Activated T-helper 2 cell treated with anti-CD3 and anti-CD28 coated beads, Interferon-gamma antibody, Interleukin-2, Interleukin-4, amounts not matched to agents 10 μg/mL and 5 μg/mL and 100 μg/mL, durations not matched to agents 14 hours and 24 hours and 36 hours (primary cell): ENCODE measurements at regions of chr6 and their contacts with region 1.

Region 1: DNA sequence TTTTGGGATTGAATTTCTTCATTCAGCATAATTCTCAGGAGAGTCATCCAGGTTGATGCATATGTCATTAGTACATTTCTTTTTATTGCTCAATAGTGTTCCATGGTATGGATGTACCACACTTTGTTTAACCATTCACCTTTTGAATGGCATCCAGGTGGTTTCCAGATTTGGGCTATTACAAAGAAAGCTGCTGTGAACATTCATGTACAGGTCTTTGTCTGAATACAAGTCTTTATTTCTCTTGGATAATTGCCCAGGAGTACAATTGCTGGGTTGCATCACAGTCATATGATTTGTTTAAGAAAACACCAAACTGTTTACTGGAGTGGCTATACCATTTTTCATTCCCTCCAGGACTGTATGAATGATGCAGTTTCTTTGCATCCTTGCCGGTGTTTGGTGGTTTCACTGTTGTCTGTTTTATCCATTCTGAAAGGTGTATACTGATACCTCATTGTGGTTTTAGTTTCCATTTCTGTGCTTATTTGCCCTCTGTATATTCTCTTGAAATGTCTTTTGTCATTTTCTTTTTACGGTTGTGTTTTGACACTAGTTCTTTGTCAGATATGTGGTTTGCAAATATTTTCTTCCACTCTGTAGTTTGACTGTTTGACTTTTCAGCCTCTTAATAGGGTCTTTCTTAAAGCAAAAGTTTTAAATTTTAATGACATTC is 8.8 kb downstream of the CDKAL1 start:
- DNase-seq: peak; percentile 31
- H3K4me3 Mint-ChIP-seq: peak overlapping the region; percentile 59
- H3K27ac Mint-ChIP-seq: peak overlapping the region; percentile 88
- H3K4me1 Mint-ChIP-seq: peaks cover 56% of the 10 kb centered on the region
- H3K27me3 Mint-ChIP-seq: no peaks in the 10 kb centered on the region

Region 2: DNA sequence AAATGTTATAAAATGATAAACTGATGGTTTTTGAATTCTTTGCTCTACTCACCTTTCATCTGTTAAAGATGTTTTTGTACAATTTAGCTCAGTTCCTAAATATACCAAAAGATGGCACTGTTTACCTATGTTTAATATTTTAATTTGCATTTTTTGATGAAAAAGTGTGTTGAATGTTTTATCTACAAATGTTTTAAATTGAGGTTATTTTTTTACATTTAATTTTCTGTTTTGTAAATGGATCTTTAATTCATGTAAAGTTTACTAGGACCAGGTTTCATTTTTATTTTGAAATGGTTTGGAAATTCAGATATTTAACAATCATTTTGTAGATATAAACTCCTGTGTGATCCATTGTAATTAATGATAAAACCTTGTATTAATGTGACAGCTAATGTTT is 21.2 kb after region 1 on chr6:
- intact Hi-C with region 1: loop called (anchors 2 kb)
- DNase-seq: no peak
- H3K4me3 Mint-ChIP-seq: no peak overlapping the region
- H3K27ac Mint-ChIP-seq: no peak overlapping the region
- H3K4me1 Mint-ChIP-seq: peaks cover 22% of the 10 kb centered on the region
- H3K27me3 Mint-ChIP-seq: no peaks in the 10 kb centered on the region

Region 3: DNA sequence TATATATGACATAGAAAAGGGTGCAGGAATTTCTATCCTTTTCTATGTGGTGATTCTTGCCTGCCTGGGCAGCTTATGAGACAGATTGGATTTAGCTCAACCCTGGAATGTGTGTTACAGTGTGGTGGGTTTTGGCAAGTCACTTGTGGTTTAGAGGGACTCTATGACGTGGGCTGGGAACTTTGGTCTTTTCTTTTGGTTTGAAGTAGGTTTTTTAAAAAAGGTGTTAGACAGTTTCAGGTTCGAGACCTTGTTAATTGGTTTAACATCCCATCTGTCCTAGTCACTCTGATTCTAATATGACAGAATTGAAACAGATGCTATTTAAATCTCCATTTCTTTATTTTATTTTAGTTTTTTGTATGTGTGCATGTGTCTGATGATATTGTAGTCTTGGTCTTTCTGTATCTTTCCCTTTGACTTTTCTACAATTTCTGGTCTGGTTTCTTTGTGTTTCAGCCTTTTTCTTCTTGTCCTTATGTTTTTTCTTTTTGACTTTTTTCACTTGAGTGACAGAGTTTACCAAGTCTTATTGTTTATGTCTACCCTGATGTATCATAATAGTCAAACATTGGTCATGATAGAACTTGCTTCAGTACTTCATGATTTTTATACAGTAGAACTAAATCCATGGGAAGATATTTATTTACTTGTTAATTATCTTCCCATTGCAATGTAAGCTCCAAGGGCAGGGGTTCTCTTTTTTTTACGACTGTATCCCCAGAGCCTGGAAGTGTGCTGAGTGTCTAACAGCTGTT is 165.5 kb after region 1 on chr6:
- intact Hi-C with region 1: loop called (anchors 5 kb)
- DNase-seq: no peak
- H3K4me3 Mint-ChIP-seq: no peak overlapping the region
- H3K27ac Mint-ChIP-seq: peak overlapping the region; percentile 38
- H3K4me1 Mint-ChIP-seq: peaks cover 62% of the 10 kb centered on the region
- H3K27me3 Mint-ChIP-seq: no peaks in the 10 kb centered on the region

Region 4: DNA sequence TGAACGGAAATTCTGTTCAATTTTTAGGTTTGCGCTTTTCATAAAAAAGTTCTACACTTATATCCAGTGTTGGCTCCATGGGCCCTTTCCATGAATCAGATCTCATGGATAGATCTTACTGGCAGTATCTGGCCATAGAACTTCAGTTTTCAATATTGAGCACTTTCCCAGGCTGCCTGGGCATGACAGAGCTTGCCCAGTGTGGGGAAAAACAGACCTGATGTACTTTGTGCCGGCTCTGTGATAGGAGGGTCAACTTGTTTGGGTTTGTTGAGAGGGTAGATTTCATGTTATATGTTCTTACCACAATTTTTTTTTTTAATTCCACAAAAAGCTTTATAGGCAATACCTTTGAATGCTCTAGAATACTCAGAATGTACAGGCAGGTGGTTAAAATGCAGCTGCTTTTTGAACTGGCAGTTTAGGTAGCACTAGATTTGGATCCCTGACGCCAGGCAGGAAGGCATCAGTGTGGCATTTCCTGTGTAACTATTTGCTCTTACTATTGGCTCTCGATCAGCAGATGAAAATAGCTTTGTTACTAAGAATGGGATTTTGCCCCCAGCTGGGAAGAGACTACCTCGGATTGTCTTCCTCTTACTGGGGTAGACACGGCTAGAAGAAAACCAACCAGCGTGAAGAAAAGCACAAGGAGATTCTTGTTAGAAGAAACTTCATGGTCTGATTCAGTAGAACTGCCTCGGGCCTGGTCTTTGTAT is 645.6 kb after region 1 on chr6:
- intact Hi-C with region 1: loop called (anchors 2 kb)
- DNase-seq: no peak
- H3K4me3 Mint-ChIP-seq: no peak overlapping the region
- H3K27ac Mint-ChIP-seq: no peak overlapping the region
- H3K4me1 Mint-ChIP-seq: peaks cover 24% of the 10 kb centered on the region
- H3K27me3 Mint-ChIP-seq: no peaks in the 10 kb centered on the region

Region 5: DNA sequence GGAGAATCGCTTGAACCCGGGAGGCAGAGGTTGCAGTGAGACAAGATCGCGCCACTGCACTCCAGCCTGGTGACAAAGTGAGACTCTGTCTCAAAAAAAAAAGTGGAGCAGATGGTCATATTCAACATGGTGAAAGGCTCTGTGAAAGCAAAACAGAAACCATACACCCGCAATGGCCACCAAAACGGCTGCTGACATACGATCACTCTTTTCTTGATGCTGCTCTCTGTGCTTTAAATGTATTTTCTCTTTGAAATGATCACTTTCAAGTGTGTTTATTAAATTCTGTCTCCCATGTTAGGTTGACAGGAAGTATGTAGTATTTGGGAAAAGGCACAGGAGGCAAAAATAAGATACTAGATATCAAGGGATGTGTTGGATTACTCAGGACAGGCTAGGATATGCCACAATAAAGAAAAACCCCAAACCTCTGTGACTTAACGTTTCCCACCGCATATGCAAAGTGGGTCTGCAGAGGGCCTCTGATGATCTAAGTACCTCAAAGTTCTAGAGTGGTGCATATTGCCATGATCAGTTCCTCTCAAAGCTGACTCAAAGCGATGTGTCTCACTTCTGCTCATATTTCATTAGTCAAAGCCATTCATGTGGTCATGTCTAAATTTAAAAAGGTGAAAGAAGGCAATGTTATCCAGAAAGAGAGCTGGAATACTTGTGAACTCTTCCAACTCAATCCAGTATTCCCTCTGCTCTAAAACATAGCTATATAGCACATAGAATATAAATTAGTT is 895.3 kb after region 1 on chr6:
- intact Hi-C with region 1: loop called (anchors 1 kb)
- DNase-seq: peak; percentile 23
- H3K4me3 Mint-ChIP-seq: peak overlapping the region; percentile 74
- H3K27ac Mint-ChIP-seq: peak overlapping the region; percentile 96
- H3K4me1 Mint-ChIP-seq: peaks cover 22% of the 10 kb centered on the region
- H3K27me3 Mint-ChIP-seq: peaks cover 14% of the 10 kb centered on the region

Region 6: GRCh38 chr6:22068561-22069305 is 1525.7 kb after region 1 on chr6:
- intact Hi-C with region 1: loop called (anchors 5 kb)
- DNase-seq: peak; percentile 13
- H3K4me3 Mint-ChIP-seq: peak overlapping the region; percentile 59
- H3K27ac Mint-ChIP-seq: peak overlapping the region; percentile 98
- H3K4me1 Mint-ChIP-seq: peaks cover 71% of the 10 kb centered on the region
- H3K27me3 Mint-ChIP-seq: no peaks in the 10 kb centered on the region